Activated CD4-positive, alpha-beta T cell treated with anti-CD3 and anti-CD28 coated beads for 36 hours (primary cell): ENCODE measurements at regions of chr9 and their contacts with region 1.

Region 1: DNA sequence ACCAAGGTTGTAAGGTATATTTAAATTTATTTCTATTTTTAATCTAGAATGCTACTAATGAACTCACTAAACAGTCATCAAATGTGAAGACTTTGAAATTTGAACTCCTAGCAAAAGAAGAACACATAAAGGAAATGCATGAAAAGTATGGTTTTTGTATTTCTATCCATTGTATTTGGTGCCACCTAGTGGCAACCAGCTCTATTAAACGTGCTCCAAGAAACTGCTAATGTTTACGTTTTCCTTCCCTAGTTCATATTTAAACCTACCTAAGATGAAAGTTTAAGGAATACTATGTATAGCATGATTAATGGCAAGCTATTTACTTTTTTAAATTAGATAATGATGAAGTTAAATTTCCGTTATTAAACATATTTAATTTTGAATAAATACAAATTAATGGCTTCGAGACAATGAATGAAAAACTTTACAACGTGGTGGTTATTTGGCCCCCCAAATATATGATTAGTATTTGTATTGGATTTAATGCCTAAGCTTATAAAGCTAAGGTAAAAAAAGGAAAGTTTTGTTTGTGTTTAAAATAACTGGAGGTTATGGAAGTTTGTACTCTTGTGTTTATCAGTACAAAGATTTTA is 115.9 kb upstream of the SH3GL2 start:
- DNase-seq: peak; percentile 25
- ATAC-seq: no peak
- H3K4me3 Mint-ChIP-seq: no peak overlapping the region
- H3K27ac Mint-ChIP-seq: no peak overlapping the region
- H3K4me1 Mint-ChIP-seq: no peaks in the 10 kb centered on the region
- H3K27me3 Mint-ChIP-seq: no peaks in the 10 kb centered on the region

Region 2: DNA sequence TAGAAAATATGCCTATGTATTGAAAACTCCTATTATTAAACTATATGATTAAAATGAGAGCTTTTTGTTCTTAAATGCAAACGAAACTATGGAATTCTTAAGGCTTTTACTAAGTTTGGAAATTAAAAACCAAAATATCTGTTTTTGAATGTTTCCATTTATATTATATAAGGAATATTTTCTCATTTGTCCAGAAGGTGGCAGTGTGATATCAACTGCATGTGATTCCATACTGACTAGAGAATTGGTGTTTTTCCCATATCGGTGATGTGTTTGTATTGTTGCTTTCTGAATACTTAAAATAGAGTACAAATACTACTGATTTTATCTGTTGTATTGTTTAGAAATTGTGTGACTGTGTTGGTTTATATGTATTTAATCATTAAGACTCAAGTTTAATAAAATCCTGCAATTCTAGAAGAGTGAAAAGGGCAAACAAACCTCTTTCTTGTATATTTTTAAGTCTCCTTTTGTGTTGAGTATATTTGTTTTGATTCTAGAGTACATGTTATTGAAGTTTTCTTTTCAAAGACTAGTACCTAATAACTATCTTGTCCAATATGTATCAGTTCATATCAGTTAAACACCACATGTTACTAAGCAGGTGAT is 1589.3 kb before region 1 on chr9:
- CTCF ChIA-PET with region 1: interaction called, 5 read pairs
- POLR2A ChIA-PET with region 1: no interaction called
- intact Hi-C with region 1: loop called (anchors 2 to 5 kb)
- DNase-seq: no peak
- ATAC-seq: no peak
- H3K4me3 Mint-ChIP-seq: no peak overlapping the region
- H3K27ac Mint-ChIP-seq: no peak overlapping the region
- H3K4me1 Mint-ChIP-seq: no peaks in the 10 kb centered on the region
- H3K27me3 Mint-ChIP-seq: no peaks in the 10 kb centered on the region

Region 3: DNA sequence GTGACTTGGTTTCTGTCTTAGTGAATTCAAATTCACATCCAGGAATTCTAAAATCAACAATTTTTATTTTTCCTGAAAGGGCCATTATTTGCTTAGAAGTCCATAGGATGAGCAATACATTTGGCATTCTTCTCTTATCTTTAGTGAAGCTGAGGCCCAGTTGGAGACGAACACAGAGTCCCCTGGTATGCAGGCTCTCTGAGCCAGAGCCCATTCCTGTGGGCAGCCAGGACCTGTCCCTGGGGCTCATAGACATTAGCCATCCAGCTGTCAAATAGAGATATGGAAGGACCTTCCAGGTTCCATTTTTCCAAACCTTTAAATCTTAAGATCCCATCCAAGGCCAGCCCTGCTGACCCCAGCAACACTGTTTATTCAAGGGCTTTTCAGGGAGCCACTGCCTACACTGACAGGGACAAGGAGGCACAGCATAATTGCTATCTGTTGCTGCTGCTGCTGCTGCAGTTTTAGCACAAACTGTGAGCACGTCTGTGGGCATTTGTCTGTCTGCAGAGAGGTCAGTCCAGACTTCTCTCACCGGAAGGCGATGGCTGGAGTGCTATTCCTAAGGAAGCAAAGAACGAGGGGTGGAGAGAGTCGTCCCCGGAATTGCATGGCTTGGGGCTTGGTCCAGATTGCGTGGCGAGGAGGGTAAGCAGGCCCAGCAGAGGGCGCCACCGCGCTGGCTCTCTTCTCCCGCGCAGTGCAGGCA is 1271.1 kb before region 1 on chr9:
- CTCF ChIA-PET with region 1: no interaction called
- POLR2A ChIA-PET with region 1: no interaction called
- intact Hi-C with region 1: loop called in 1 of 2 experiments (anchors 5 kb)
- DNase-seq: peak; percentile 72
- ATAC-seq: peak; percentile 64
- H3K4me3 Mint-ChIP-seq: no peak overlapping the region
- H3K27ac Mint-ChIP-seq: no peak overlapping the region
- H3K4me1 Mint-ChIP-seq: no peaks in the 10 kb centered on the region
- H3K27me3 Mint-ChIP-seq: no peaks in the 10 kb centered on the region

Region 4: GRCh38 chr9:17063535-17064135 is 399.3 kb before region 1 on chr9:
- CTCF ChIA-PET with region 1: interaction called, 16 read pairs
- POLR2A ChIA-PET with region 1: no interaction called
- intact Hi-C with region 1: loop called (anchors 1 to 2 kb)
- DNase-seq: peak; percentile 13
- ATAC-seq: no peak
- H3K4me3 Mint-ChIP-seq: no peak overlapping the region
- H3K27ac Mint-ChIP-seq: no peak overlapping the region
- H3K4me1 Mint-ChIP-seq: no peaks in the 10 kb centered on the region
- H3K27me3 Mint-ChIP-seq: no peaks in the 10 kb centered on the region

Region 5: GRCh38 chr9:17116400-17116837 is 346.5 kb before region 1 on chr9:
- CTCF ChIA-PET with region 1: interaction called, 36 read pairs
- POLR2A ChIA-PET with region 1: no interaction called
- intact Hi-C with region 1: loop called (anchors 1 kb)
- DNase-seq: no peak
- ATAC-seq: no peak
- H3K4me3 Mint-ChIP-seq: no peak overlapping the region
- H3K27ac Mint-ChIP-seq: no peak overlapping the region
- H3K4me1 Mint-ChIP-seq: no peaks in the 10 kb centered on the region
- H3K27me3 Mint-ChIP-seq: no peaks in the 10 kb centered on the region

Region 6: GRCh38 chr9:17387565-17387964 is 75.4 kb before region 1 on chr9:
- CTCF ChIA-PET with region 1: no interaction called
- POLR2A ChIA-PET with region 1: no interaction called
- intact Hi-C with region 1: no loop called
- DNase-seq: no peak
- ATAC-seq: no peak
- H3K4me3 Mint-ChIP-seq: no peak overlapping the region
- H3K27ac Mint-ChIP-seq: no peak overlapping the region
- H3K4me1 Mint-ChIP-seq: no peaks in the 10 kb centered on the region
- H3K27me3 Mint-ChIP-seq: no peaks in the 10 kb centered on the region

Region 7: DNA sequence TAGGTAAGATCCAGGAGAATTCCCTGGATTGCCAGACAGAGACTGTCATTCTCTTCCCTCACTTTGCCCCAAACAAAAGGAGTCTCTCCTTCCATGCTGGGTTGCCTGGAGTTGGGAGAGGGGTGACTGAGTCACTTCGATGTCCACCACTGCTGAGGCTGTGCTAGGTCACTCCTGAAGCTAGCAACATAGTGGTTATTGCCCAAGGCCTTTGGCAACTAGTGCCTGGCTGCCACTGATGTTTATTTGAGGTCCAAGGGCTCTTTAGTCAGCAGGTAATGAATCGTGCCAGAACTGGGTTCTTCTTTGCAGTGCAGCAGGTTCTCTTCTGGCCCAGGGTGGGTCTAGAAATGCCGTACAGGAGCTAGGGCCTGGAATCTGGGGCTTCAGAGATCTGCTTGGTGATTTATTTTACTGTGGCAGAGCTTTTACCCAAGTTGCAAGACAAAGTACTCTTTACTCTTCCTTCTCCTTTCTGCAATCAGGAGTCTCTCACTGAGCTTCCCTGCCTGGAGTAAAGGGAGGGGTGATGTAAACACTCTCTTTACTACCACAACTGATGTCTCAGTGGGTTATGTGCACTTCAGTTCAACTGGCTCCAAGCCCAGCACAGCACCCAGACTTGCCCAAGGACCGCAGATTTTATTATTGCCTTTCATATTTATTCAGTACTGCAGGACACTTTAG is 39.8 kb before region 1 on chr9:
- CTCF ChIA-PET with region 1: no interaction called
- POLR2A ChIA-PET with region 1: no interaction called
- intact Hi-C with region 1: no loop called
- DNase-seq: no peak
- ATAC-seq: no peak
- H3K4me3 Mint-ChIP-seq: no peak overlapping the region
- H3K27ac Mint-ChIP-seq: no peak overlapping the region
- H3K4me1 Mint-ChIP-seq: no peaks in the 10 kb centered on the region
- H3K27me3 Mint-ChIP-seq: no peaks in the 10 kb centered on the region